ENCODE measurements at regions of chr11 and their contacts with region 1.

Region 1: GRCh38 chr11:102451681-102452460 is 694 bp downstream of the TMEM123 start:
- DNase-seq: peak; percentile 78 to 82 (median 82)
- H3K4me3 ChIP-seq: peak overlapping the region; percentile 83 to 94
- H3K4me3 Mint-ChIP-seq: peak overlapping the region; percentile 89 to 99 (median 98)
- H3K27ac ChIP-seq: peak overlapping the region; percentile 86
- H3K27ac Mint-ChIP-seq: peak overlapping the region; percentile 94 to 98 (median 97)
- H3K4me1 ChIP-seq: peaks cover 70% of the 10 kb centered on the region
- H3K4me1 Mint-ChIP-seq: peaks cover 63 to 93% (median 76%) of the 10 kb centered on the region in 4 donors
- H3K27me3 ChIP-seq: no peaks in the 10 kb centered on the region
- H3K27me3 Mint-ChIP-seq: no peaks in the 10 kb centered on the region

Region 2: DNA sequence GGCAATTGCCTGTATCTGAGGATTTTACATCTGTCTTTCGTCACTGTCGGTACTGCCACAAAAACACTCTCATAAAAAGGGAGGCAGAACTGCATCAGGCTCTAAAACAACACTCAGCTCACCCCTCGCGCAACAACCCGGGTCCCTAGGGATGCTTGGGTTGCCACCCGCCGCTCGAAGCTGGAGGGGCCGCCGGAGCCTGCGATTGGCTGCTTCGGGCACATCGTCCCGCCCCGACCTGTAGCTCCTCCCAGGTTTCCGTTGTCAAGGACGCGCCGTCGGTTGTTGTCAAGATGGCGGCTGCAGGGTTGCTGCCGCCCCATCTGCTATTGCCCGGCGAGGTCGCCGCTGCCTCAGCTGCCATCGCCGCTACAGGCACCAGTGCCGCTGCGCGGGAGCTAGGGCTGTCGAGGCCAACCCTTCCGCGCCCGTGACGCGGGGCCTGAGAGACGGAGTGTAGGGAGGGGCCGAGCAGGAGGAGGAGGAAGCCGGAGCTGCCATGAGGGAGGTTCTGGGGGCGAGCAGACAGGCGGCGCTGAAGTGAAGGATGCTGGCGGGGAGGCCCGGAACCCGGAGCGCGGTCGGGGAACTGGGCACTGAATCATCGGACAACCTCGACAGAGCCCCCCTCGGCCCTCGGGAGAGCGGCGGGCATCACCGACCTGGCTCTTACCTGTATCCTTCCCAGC is 537.0 kb before region 1 on chr11 and contains the start of gene CEP126:
- CTCF ChIA-PET with region 1: no interaction called
- POLR2A ChIA-PET with region 1: no interaction called
- intact Hi-C with region 1: loop called (anchors 10 kb)
- DNase-seq: peak; percentile 91 to 94 (median 93)
- H3K4me3 ChIP-seq: peak within 1 kb of the TSS; percentile 43 to 64
- H3K4me3 Mint-ChIP-seq: peak within 1 kb of the TSS; percentile 88 to 96 (median 94)
- H3K27ac ChIP-seq: peak within 1 kb of the TSS; percentile 60
- H3K27ac Mint-ChIP-seq: peak within 1 kb of the TSS; percentile 89 to 94 (median 92)
- H3K4me1 ChIP-seq: peaks cover 18% of the 10 kb centered on the region
- H3K4me1 Mint-ChIP-seq: peaks cover 18 to 25% (median 22%) of the 10 kb centered on the region in 4 donors
- H3K27me3 ChIP-seq: no peaks in the 10 kb centered on the region
- H3K27me3 Mint-ChIP-seq: peaks cover 0 to 5% of the 10 kb centered on the region in 2 donors
- total RNA-seq, gene CEP126: 2.4 to 2.6 TPM

Region 3: DNA sequence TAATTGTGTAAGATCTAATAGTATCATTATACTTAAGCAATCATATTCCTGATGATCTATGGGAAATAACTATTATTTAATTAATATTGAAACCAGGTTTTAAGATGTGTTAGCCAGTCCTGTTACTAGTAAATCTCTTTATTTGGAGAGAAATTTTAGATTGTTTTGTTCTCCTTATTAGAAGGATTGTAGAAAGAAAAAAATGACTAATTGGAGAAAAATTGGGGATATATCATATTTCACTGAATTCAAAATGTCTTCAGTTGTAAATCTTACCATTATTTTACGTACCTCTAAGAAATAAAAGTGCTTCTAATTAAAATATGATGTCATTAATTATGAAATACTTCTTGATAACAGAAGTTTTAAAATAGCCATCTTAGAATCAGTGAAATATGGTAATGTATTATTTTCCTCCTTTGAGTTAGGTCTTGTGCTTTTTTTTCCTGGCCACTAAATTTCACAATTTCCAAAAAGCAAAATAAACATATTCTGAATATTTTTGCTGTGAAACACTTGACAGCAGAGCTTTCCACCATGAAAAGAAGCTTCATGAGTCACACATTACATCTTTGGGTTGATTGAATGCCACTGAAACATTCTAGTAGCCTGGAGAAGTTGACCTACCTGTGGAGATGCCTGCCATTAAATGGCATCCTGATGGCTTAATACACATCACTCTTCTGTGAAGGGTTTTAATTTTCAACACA is 128.2 kb before region 1 on chr11:
- CTCF ChIA-PET with region 1: interaction called, 3 read pairs
- POLR2A ChIA-PET with region 1: interaction called, 10 read pairs
- intact Hi-C with region 1: no loop called
- DNase-seq: no peak
- H3K4me3 ChIP-seq: peak overlapping the region in 1 of 2 donors; percentile 2
- H3K4me3 Mint-ChIP-seq: peak overlapping the region in 3 of 8 donors; percentile 9 to 59 (median 29)
- H3K27ac ChIP-seq: no peak overlapping the region
- H3K27ac Mint-ChIP-seq: peak overlapping the region in 5 of 7 donors; percentile 30 to 81 (median 57)
- H3K4me1 ChIP-seq: peaks cover 75% of the 10 kb centered on the region
- H3K4me1 Mint-ChIP-seq: peaks cover 37 to 72% (median 49%) of the 10 kb centered on the region in 4 donors
- H3K27me3 ChIP-seq: no peaks in the 10 kb centered on the region
- H3K27me3 Mint-ChIP-seq: no peaks in the 10 kb centered on the region

Region 4: GRCh38 chr11:102396708-102397563 is 54.9 kb before region 1 on chr11:
- CTCF ChIA-PET with region 1: interaction called, 99 read pairs
- POLR2A ChIA-PET with region 1: interaction called, 17 read pairs
- intact Hi-C with region 1: no loop called
- DNase-seq: no peak
- H3K4me3 ChIP-seq: no peak overlapping the region
- H3K4me3 Mint-ChIP-seq: peak overlapping the region in 2 of 8 donors; percentile 26 to 43
- H3K27ac ChIP-seq: no peak overlapping the region
- H3K27ac Mint-ChIP-seq: peak overlapping the region; percentile 57 to 89 (median 80)
- H3K4me1 ChIP-seq: peaks cover 30% of the 10 kb centered on the region
- H3K4me1 Mint-ChIP-seq: peaks cover 24 to 44% (median 36%) of the 10 kb centered on the region in 4 donors
- H3K27me3 ChIP-seq: no peaks in the 10 kb centered on the region
- H3K27me3 Mint-ChIP-seq: no peaks in the 10 kb centered on the region

Region 5: DNA sequence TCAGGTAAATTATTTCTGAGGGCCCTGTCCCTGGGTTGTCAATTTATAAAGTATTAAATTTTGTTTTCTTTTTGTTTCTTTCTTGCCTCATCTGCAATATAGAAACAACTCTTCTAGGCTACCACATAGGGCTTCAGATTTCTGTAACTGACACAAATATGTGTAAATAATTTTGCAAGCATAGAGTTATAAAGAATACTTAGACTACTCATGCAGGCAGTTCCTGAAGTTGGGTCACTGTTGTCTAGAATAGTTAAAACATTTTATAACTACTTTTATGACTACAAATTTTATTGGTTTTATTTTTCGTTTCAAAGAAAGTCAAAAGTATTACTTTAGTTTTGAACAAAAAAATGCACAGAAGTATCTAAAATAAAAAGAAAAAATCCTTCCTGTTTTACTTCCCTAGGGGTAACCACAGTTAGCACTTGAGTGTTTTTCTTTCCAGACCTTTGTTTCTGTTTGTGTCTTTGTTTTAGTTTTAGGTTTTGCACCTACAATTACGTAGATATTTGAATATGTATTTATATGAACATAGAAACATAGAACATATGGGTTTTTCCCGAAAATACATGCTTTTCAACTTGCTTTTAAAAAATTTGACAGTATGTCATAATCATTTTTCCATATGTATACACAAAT is 13.1 kb after region 1 on chr11:
- CTCF ChIA-PET with region 1: interaction called, 8 read pairs
- POLR2A ChIA-PET with region 1: interaction called, 26 read pairs
- intact Hi-C with region 1: loop called (anchors 1 kb)
- DNase-seq: no peak
- H3K4me3 ChIP-seq: no peak overlapping the region
- H3K4me3 Mint-ChIP-seq: peak overlapping the region in 5 of 8 donors; percentile 41 to 68 (median 51)
- H3K27ac ChIP-seq: no peak overlapping the region
- H3K27ac Mint-ChIP-seq: peak overlapping the region in 5 of 7 donors; percentile 5 to 90 (median 50)
- H3K4me1 ChIP-seq: peaks cover 57% of the 10 kb centered on the region
- H3K4me1 Mint-ChIP-seq: peaks cover 42 to 64% (median 52%) of the 10 kb centered on the region in 4 donors
- H3K27me3 ChIP-seq: no peaks in the 10 kb centered on the region
- H3K27me3 Mint-ChIP-seq: no peaks in the 10 kb centered on the region

Region 6: DNA sequence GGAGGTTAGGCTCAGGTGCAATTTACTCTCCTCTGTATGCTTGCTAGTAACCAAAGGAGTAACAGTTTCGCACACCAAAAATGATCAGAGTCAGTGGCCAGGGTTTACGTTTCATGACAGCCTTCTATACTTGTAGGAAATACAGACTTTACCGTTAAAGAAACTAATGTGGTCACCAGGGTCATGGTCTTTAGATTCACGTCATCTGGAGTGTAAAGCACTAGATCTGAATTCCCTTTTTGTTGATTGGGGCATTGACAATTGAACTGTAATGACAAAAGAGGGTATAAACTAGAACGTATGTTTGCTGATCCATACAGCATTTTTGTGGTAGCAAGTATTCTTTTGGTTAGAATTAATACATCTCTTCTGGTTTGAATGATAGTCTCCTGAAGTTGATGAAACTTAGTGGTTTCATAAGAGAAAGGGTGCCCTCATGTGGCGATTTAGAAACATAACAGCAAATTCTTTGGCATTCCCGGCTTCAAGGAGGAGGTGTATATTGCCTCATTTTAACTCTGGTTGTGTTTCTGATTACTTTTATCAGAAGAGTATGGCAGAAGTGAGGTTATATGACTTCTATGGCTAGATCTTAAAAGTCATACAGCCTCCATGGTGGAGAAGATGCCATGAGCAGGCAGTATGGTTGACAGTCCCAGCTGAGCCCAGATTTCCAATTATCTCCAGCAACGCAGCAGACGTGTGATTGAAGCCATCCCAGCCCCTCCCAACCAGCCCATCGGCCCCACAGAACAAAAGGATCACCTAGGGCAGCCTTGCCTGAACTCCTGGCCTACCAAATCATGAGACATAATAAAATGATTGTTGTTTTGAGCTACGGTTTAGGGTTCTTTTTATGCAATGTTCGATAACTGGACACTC is 43.5 kb after region 1 on chr11:
- CTCF ChIA-PET with region 1: interaction called, 6 read pairs
- POLR2A ChIA-PET with region 1: interaction called, 3 read pairs
- intact Hi-C with region 1: loop called (anchors 1 kb)
- DNase-seq: peak; percentile 59 to 75 (median 73)
- H3K4me3 ChIP-seq: no peak overlapping the region
- H3K4me3 Mint-ChIP-seq: peak overlapping the region in 1 of 8 donors; percentile 6
- H3K27ac ChIP-seq: no peak overlapping the region
- H3K27ac Mint-ChIP-seq: no peak overlapping the region
- H3K4me1 ChIP-seq: peaks cover 4% of the 10 kb centered on the region
- H3K4me1 Mint-ChIP-seq: peaks cover 0 to 7% (median 5%) of the 10 kb centered on the region in 4 donors
- H3K27me3 ChIP-seq: peaks cover 4% of the 10 kb centered on the region
- H3K27me3 Mint-ChIP-seq: peaks cover 5 to 7% of the 10 kb centered on the region in 2 donors

Measured in CD4-positive, alpha-beta memory T cell (primary cell).